ENCODE measurements at regions of chr7 and their contacts with region 1.

Region 1: GRCh38 chr7:22726345-22727185 is 435 bp upstream of the IL6 start:
- DNase-seq: no peak

Region 2: GRCh38 chr7:22589641-22590201 is 136.8 kb before region 1 on chr7:
- intact Hi-C with region 1: loop called (anchors 2 kb)
- DNase-seq: peak; percentile 87